K562 (cell line): ENCODE measurements at regions of chr9 and their contacts with region 1.

Region 1: DNA sequence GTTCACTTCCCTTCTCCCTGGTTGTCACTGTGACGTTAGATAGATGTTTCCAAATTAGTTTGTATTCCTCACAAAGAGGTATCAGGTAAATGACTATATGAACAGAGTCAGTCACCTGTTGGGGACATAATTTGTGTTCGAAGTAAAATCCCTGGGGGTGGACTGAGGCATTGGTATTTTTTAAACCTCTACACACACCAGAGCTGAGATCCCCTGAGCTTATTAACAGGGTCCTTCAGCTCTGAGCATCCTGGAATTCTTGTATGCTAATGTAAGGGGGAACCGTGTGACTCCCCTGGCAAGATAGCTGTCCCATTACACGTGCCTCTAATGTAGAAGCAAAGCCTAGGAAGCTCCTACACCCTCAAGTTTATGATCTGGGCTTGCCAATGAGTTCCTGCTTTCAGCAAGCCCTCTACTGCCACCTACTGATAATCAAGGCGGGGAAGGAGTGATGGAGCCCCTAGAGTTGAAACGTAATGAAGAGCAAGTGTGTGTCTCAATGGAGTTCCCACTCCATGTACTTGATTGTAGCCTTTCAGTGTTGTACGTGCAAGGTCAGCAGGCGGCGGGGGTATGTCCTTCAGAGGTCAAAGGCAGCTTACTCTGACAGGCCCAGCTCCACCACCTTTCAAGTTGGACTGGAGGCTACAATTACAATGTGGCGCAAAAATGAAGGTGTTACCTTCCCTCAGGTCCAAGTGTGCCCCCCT is 14.4 kb downstream of the PRKACG start:
- DNase-seq: peak; percentile 46 to 86 (median 64)
- ATAC-seq: peak; percentile 94
- H3K4me3 ChIP-seq: no peak overlapping the region
- H3K27ac ChIP-seq: peak overlapping the region; percentile 48
- H3K4me1 ChIP-seq: peaks cover 5 to 16% of the 10 kb centered on the region in 2 experiments; a peak in 4 of 5 replicates
- H3K27me3 ChIP-seq: no peaks in the 10 kb centered on the region
- CTCF ChIP-seq: peak; percentile 81 to 97 (median 94)
- EP300 ChIP-seq: no peak
- POLR2A ChIP-seq: no peak
- RAD21 ChIP-seq: peak; percentile 70 to 92

Region 2: DNA sequence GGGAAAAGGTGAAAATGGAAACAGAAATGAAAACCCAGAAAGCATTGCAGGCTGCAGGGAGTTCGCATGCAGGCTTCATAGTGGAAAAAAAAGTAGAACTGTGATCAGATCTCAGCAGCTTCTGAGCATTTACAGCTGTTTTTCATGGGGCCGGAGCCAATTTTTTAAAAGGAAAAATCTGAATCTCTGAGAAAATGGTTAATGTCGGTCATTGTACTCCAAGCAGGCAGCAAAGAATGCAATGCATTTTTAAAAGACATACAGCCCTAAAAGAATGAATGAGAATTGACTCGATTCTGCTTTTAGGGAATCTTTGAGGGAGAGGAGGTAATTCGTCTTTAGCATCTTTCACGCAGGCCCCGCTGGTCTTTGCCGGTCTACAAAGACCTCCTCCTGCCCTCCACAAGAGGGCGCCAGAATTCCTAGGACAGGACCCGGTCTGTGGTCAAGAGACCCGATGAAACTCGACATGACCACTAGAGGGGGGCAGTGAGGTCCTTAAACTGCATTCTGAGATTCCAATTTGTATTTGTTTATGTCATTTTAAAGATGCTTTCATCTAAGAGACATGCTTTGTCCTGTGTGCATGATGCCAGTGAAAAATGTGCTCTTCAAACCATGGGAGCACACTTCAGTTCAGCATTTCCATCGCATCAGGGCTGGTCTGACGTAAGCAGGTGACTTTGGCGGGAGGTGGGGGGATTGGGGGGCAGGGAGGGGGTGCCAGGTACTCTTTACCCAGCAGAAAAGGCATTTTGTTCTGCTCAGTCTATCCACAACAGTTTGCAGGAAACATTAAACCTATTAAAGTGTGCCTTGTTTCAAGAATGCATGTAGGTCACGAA is 415.1 kb before region 1 on chr9:
- CTCF ChIA-PET with region 1: interaction called, 27 read pairs
- POLR2A ChIA-PET with region 1: no interaction called
- in situ Hi-C with region 1: loop called (anchors 5 kb)
- intact Hi-C with region 1: loop called (anchors 1 kb)
- DNase-seq: peak; percentile 81 to 92 (median 88)
- ATAC-seq: peak; percentile 98
- H3K4me3 ChIP-seq: no peak overlapping the region
- H3K27ac ChIP-seq: no peak overlapping the region
- H3K4me1 ChIP-seq: no peaks in the 10 kb centered on the region; a peak in 1 of 5 replicates
- H3K27me3 ChIP-seq: no peaks in the 10 kb centered on the region; a peak in 1 of 5 replicates
- CTCF ChIP-seq: peak; percentile 98 to 100 (median 100)
- EP300 ChIP-seq: no peak
- POLR2A ChIP-seq: no peak
- RAD21 ChIP-seq: peak; percentile 96 to 98

Region 3: GRCh38 chr9:68779558-68780384 is 219.8 kb before region 1 on chr9:
- CTCF ChIA-PET with region 1: no interaction called
- POLR2A ChIA-PET with region 1: no interaction called
- in situ Hi-C with region 1: no loop called
- intact Hi-C with region 1: loop called (anchors 2 kb)
- DNase-seq: peak; percentile 88 to 93 (median 88)
- ATAC-seq: peak; percentile 76
- H3K4me3 ChIP-seq: peak overlapping the region; percentile 81
- H3K27ac ChIP-seq: peak overlapping the region; percentile 99
- H3K4me1 ChIP-seq: peaks cover 4 to 39% of the 10 kb centered on the region in 2 experiments; a peak in 4 of 5 replicates
- H3K27me3 ChIP-seq: no peaks in the 10 kb centered on the region
- CTCF ChIP-seq: peak; percentile 31 to 66 (median 40); a peak in 5 of 6 replicates
- EP300 ChIP-seq: peak; percentile 34; the same call in 1 of the 2 replicates
- POLR2A ChIP-seq: peak; percentile 82
- RAD21 ChIP-seq: peak; percentile 29 to 65; a peak in 3 of 4 replicates

Region 4: DNA sequence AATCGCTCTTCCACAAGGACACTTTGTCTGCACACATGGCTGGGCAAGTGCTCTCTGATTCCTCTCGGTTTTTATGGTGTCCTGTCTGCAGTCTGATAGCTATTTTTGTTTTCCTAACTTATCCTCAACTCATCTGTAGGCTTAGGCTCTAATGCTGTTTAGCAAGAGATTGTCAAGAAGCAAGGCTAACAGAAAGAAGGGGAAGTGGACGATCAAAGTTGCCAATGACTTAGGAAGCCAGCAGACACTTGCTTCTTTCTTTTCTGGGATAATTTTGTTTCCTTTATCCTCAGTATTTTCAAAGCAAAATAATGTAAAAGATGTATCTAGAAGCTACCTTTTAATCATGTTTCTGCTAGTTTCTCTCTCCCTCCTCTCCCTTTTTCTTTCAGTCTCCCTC is 116.3 kb before region 1 on chr9:
- CTCF ChIA-PET with region 1: no interaction called
- POLR2A ChIA-PET with region 1: no interaction called
- in situ Hi-C with region 1: no loop called
- intact Hi-C with region 1: loop called (anchors 5 kb)
- DNase-seq: no peak
- ATAC-seq: no peak
- H3K4me3 ChIP-seq: no peak overlapping the region
- H3K27ac ChIP-seq: no peak overlapping the region
- H3K4me1 ChIP-seq: no peaks in the 10 kb centered on the region; a peak in 3 of 5 replicates
- H3K27me3 ChIP-seq: no peaks in the 10 kb centered on the region
- CTCF ChIP-seq: no peak
- EP300 ChIP-seq: no peak
- POLR2A ChIP-seq: no peak
- RAD21 ChIP-seq: no peak

Region 5: GRCh38 chr9:69019808-69020207 is 20.3 kb after region 1 on chr9:
- CTCF ChIA-PET with region 1: no interaction called
- POLR2A ChIA-PET with region 1: interaction called, 5 read pairs
- in situ Hi-C with region 1: no loop called
- intact Hi-C with region 1: loop called (anchors 2 kb)
- DNase-seq: peak; percentile 53 to 86 (median 69)
- ATAC-seq: peak; percentile 92
- H3K4me3 ChIP-seq: no peak overlapping the region
- H3K27ac ChIP-seq: peak overlapping the region; percentile 97
- H3K4me1 ChIP-seq: peaks cover 26 to 55% of the 10 kb centered on the region in 2 experiments
- H3K27me3 ChIP-seq: no peaks in the 10 kb centered on the region
- CTCF ChIP-seq: no peak
- EP300 ChIP-seq: peak; percentile 94
- POLR2A ChIP-seq: no peak
- RAD21 ChIP-seq: no peak

Region 6: GRCh38 chr9:69078581-69078980 is 79.0 kb after region 1 on chr9:
- CTCF ChIA-PET with region 1: no interaction called
- POLR2A ChIA-PET with region 1: no interaction called
- in situ Hi-C with region 1: no loop called
- intact Hi-C with region 1: no loop called
- DNase-seq: no peak
- ATAC-seq: no peak
- H3K4me3 ChIP-seq: no peak overlapping the region
- H3K27ac ChIP-seq: no peak overlapping the region
- H3K4me1 ChIP-seq: no peaks in the 10 kb centered on the region
- H3K27me3 ChIP-seq: no peaks in the 10 kb centered on the region
- CTCF ChIP-seq: no peak
- EP300 ChIP-seq: no peak
- POLR2A ChIP-seq: no peak
- RAD21 ChIP-seq: no peak

Region 7: GRCh38 chr9:69097064-69097463 is 97.5 kb after region 1 on chr9:
- CTCF ChIA-PET with region 1: no interaction called
- POLR2A ChIA-PET with region 1: no interaction called
- in situ Hi-C with region 1: no loop called
- intact Hi-C with region 1: no loop called
- DNase-seq: no peak
- ATAC-seq: no peak
- H3K4me3 ChIP-seq: no peak overlapping the region
- H3K27ac ChIP-seq: no peak overlapping the region
- H3K4me1 ChIP-seq: no peaks in the 10 kb centered on the region
- H3K27me3 ChIP-seq: no peaks in the 10 kb centered on the region
- CTCF ChIP-seq: no peak
- EP300 ChIP-seq: no peak
- POLR2A ChIP-seq: no peak
- RAD21 ChIP-seq: no peak